H1 (cell line): ENCODE measurements at regions of chr1 and their contacts with region 1.

Region 1: DNA sequence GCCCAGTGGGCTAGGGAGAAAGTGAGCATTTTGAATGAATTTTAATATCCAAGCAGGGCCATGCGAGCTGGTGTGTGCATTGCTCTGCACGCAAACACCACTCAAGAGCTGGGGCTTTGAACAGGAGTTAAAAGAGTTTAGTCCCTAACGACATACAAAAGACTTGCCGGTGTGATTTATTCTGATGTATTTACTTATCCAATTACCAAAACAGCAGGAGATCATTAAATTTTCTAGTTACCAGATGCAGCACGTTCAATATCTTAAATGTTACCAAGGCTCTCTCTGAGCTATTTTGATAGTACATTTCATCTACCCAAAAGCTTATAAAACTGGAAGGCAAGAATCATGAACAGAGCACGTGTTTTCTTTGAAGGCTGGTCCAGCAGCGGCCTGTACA is 30.0 kb upstream of the DMRTA2 start:
- DNase-seq: no peak
- H3K4me3 ChIP-seq: no peak overlapping the region
- H3K27ac ChIP-seq: no peak overlapping the region
- H3K4me1 ChIP-seq: peaks cover 0 to 5% (median 0%) of the 10 kb centered on the region in 4 experiments; a peak in 1 of 7 replicates
- H3K27me3 ChIP-seq: no peaks in the 10 kb centered on the region
- CTCF ChIP-seq: no peak
- EP300 ChIP-seq: no peak
- POLR2A ChIP-seq: no peak
- RAD21 ChIP-seq: no peak

Region 2: GRCh38 chr1:50471967-50472366 is 18.7 kb after region 1 on chr1:
- CTCF ChIA-PET with region 1: interaction called, 10 read pairs
- POLR2A ChIA-PET with region 1: no interaction called
- DNase-seq: no peak
- H3K4me3 ChIP-seq: no peak overlapping the region
- H3K27ac ChIP-seq: no peak overlapping the region
- H3K4me1 ChIP-seq: no peaks in the 10 kb centered on the region; a peak in 1 of 7 replicates
- H3K27me3 ChIP-seq: no peaks in the 10 kb centered on the region
- CTCF ChIP-seq: peak in 1 of 3 experiments; percentile 34; a peak in 1 of 4 replicates
- EP300 ChIP-seq: no peak
- POLR2A ChIP-seq: no peak
- RAD21 ChIP-seq: peak in 1 of 2 experiments; percentile 8; a peak in 1 of 4 replicates